Body of pancreas (tissue), 4 donors: ENCODE measurements at regions of chr16 and their contacts with region 1.

Region 1: GRCh38 chr16:10964039-10964890 is 19.9 kb downstream of the CLEC16A start:
- DNase-seq: peak; percentile 83 to 88 (median 84)
- ATAC-seq: peak; percentile 90
- H3K4me3 ChIP-seq: no peak overlapping the region
- H3K27ac ChIP-seq: peak overlapping the region in 2 of 4 donors; percentile 26 to 37
- H3K4me1 ChIP-seq: peaks cover 16% of the 10 kb centered on the region
- H3K27me3 ChIP-seq: no peaks in the 10 kb centered on the region
- CTCF ChIP-seq: peak; percentile 85 to 94 (median 91)
- POLR2A ChIP-seq: no peak

Region 2: GRCh38 chr16:11263737-11264136 is 299.5 kb after region 1 on chr16:
- intact Hi-C with region 1: loop called (anchors 10 kb)
- DNase-seq: no peak
- ATAC-seq: no peak
- H3K4me3 ChIP-seq: no peak overlapping the region
- H3K27ac ChIP-seq: no peak overlapping the region
- H3K4me1 ChIP-seq: peaks cover 15% of the 10 kb centered on the region
- H3K27me3 ChIP-seq: no peaks in the 10 kb centered on the region
- CTCF ChIP-seq: no peak
- POLR2A ChIP-seq: no peak

Region 3: GRCh38 chr16:11356573-11357331 is 392.5 kb after region 1 on chr16:
- intact Hi-C with region 1: loop called (anchors 5 kb)
- DNase-seq: peak; percentile 66 to 82 (median 72)
- ATAC-seq: peak; percentile 29
- H3K4me3 ChIP-seq: no peak overlapping the region
- H3K27ac ChIP-seq: peak overlapping the region; percentile 80 to 88 (median 82)
- H3K4me1 ChIP-seq: peaks cover 32% of the 10 kb centered on the region
- H3K27me3 ChIP-seq: no peaks in the 10 kb centered on the region
- CTCF ChIP-seq: peak; percentile 30 to 70 (median 55)
- POLR2A ChIP-seq: no peak